ENCODE measurements at regions of chr10 and their contacts with region 1.

Region 1: GRCh38 chr10:12710594-12711349 is 290.7 kb downstream of the CCDC3 start:
- DNase-seq: peak; percentile 92
- H3K4me3 ChIP-seq: no peak overlapping the region
- H3K27ac ChIP-seq: peak overlapping the region; percentile 88
- H3K4me1 ChIP-seq: peaks cover 58% of the 10 kb centered on the region
- H3K27me3 ChIP-seq: no peaks in the 10 kb centered on the region
- CTCF ChIP-seq: peak; percentile 98

Region 2: GRCh38 chr10:12348870-12349628 is 361.7 kb before region 1 on chr10 and contains the start of gene CAMK1D:
- CTCF ChIA-PET with region 1: interaction called, 5 read pairs
- POLR2A ChIA-PET with region 1: no interaction called
- intact Hi-C with region 1: loop called (anchors 10 kb)
- DNase-seq: peak; percentile 90
- H3K4me3 ChIP-seq: peak within 1 kb of the TSS; percentile 98
- H3K27ac ChIP-seq: peak within 1 kb of the TSS; percentile 80
- H3K4me1 ChIP-seq: peaks cover 19% of the 10 kb centered on the region
- H3K27me3 ChIP-seq: no peaks in the 10 kb centered on the region
- CTCF ChIP-seq: peak; percentile 44; the same call in 1 of the 2 replicates
- total RNA-seq, gene CAMK1D: 23.7 and 27.0 TPM in 2 replicates

Region 3: DNA sequence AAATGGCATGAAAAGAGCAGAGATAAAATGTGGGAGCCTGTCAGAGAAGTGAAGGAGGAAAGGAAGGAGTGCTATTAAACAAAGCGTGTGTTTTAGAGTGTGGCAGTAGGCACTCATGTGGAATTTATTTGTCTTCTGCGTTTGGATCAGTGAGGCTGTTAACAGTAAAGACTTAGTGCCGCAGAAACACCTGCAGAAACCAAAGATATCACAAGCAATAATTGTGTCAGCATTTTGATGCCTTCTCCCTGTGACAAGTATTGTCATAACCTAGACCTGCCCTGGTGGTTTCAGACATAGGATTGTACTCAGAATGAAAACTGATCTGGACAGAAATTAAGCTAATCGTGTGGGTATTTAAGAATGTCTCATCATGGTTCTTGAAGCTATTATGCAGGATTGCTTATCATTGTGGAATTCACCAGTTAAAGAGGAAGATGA is 170.4 kb before region 1 on chr10:
- CTCF ChIA-PET with region 1: no interaction called
- POLR2A ChIA-PET with region 1: interaction called, 17 read pairs
- intact Hi-C with region 1: loop called (anchors 5 kb)
- DNase-seq: peak; percentile 63
- H3K4me3 ChIP-seq: no peak overlapping the region
- H3K27ac ChIP-seq: peak overlapping the region; percentile 96
- H3K4me1 ChIP-seq: peaks cover 63% of the 10 kb centered on the region
- H3K27me3 ChIP-seq: no peaks in the 10 kb centered on the region
- CTCF ChIP-seq: no peak

Region 4: DNA sequence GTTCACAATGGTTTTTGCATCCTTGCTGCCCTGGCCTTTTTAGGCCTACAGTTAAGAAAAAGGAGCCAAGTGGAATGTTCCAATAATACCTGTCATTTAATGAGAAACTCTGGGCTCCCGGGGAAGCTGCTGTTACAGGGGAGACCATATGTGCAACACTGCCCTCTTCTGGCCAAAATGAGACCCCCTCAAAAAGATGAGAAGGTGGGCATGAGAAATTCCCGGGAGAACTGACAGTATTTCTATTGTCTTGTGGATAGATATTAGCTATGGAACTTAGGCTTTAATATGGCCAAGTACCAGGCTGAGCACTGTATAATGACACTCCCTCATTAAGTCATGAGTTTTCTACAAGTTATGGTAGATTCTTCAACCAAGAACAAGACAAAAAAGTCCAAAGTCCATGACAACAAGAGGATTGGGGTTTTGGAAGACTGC is 191.4 kb after region 1 on chr10:
- CTCF ChIA-PET with region 1: interaction called, 4 read pairs
- POLR2A ChIA-PET with region 1: no interaction called
- intact Hi-C with region 1: loop called (anchors 2 kb)
- DNase-seq: peak; percentile 81
- H3K4me3 ChIP-seq: no peak overlapping the region
- H3K27ac ChIP-seq: no peak overlapping the region
- H3K4me1 ChIP-seq: no peaks in the 10 kb centered on the region
- H3K27me3 ChIP-seq: no peaks in the 10 kb centered on the region
- CTCF ChIP-seq: peak; percentile 86

Region 5: DNA sequence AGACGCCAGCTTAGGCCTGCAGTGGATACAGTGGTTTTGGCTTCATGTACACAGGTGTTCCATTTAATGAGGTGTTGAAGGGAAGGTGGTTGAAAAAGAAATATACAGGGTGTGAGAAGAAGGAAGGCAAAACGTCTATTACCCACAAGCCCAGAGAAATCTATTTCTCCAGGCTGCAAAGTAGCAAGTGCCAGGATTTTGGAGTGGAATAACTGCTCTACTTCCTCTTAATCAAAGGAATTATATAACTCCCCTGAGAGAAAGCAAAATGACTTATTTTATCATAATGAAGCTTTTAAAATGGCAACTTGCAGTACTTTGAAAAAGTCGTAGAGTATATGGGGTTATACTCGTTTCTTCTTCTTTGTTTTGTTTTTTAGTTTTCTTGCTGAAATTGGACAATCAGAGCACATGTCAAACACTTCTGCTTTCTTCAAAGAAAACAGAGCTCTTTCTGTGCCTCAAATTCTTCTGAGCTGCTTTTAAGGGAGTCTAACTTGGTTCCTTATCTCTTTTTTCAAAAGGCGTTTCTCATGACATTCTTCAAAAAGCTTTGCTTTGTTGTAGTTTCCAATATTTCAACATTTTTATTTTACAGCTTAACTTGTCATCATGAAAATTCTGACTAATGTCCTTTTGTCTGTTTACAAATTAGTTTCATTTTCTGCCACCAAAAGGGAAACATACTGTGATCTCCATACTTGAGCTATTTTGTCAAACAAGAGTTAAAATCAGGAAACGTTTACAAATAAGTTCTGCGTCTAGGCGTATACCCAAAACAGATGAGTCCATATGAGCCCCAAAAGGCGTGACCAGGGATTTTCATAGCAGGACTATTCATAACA is 1330.2 kb after region 1 on chr10:
- CTCF ChIA-PET with region 1: no interaction called
- POLR2A ChIA-PET with region 1: no interaction called
- intact Hi-C with region 1: no loop called
- DNase-seq: no peak
- H3K4me3 ChIP-seq: no peak overlapping the region
- H3K27ac ChIP-seq: no peak overlapping the region
- H3K4me1 ChIP-seq: peaks cover 11% of the 10 kb centered on the region
- H3K27me3 ChIP-seq: no peaks in the 10 kb centered on the region
- CTCF ChIP-seq: no peak

Measured in A673 (cell line).